Thyroid gland (tissue), 4 donors: ENCODE measurements at regions of chr1 and their contacts with region 1.

Region 1: GRCh38 chr1:12124693-12125421 is 41.9 kb upstream of the TNFRSF1B start:
- DNase-seq: peak; percentile 80 to 85
- H3K4me3 ChIP-seq: no peak overlapping the region
- H3K27ac ChIP-seq: peak overlapping the region in 1 of 3 donors; percentile 2
- H3K4me1 ChIP-seq: peaks cover 13% of the 10 kb centered on the region in 2 donors
- H3K27me3 ChIP-seq: no peaks in the 10 kb centered on the region
- CTCF ChIP-seq: peak; percentile 92 to 99 (median 98)
- POLR2A ChIP-seq: no peak

Region 2: DNA sequence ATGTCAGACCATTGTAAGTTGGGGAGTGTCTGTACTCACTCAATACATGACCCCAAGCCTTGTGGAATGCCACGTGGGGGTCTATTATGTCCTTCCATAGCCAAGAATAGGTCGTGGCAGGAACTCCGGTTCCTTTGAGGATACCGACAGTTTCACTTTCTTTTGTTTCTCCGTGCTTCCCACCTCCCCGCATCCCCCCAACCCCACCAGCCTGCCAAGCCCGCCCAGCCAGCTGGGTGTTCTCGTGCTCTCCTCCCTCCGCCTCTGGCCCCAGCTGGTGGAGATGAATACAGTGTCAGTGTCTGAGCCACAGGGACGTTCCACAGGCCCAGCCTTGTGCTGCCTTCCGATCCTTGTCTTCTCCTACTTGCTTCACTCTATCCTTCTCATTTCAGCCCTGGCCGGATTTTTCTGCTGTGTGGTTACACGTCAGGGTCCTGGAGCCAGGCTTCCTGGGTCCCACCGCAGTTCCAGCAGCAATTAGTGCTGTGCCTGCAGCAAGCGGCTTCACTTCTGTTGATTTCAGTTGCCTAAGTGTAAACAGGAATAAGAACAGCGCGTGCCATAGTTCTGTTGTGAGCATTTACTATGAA is 393.1 kb before region 1 on chr1:
- intact Hi-C with region 1: no loop called
- DNase-seq: peak in 1 of 2 donors; percentile 68
- H3K4me3 ChIP-seq: peak overlapping the region in 1 of 3 donors; percentile 12
- H3K27ac ChIP-seq: peak overlapping the region in 1 of 3 donors; percentile 17
- H3K4me1 ChIP-seq: peaks cover 5 to 24% of the 10 kb centered on the region in 2 donors
- H3K27me3 ChIP-seq: no peaks in the 10 kb centered on the region
- CTCF ChIP-seq: no peak
- POLR2A ChIP-seq: no peak

Region 3: GRCh38 chr1:12208764-12209494 is 84.1 kb after region 1 on chr1:
- intact Hi-C with region 1: loop called (anchors 2 kb)
- DNase-seq: peak; percentile 89 to 92
- H3K4me3 ChIP-seq: no peak overlapping the region
- H3K27ac ChIP-seq: no peak overlapping the region
- H3K4me1 ChIP-seq: peaks cover 0 to 14% of the 10 kb centered on the region in 2 donors
- H3K27me3 ChIP-seq: no peaks in the 10 kb centered on the region
- CTCF ChIP-seq: peak; percentile 89 to 99 (median 94)
- POLR2A ChIP-seq: no peak

Region 4: DNA sequence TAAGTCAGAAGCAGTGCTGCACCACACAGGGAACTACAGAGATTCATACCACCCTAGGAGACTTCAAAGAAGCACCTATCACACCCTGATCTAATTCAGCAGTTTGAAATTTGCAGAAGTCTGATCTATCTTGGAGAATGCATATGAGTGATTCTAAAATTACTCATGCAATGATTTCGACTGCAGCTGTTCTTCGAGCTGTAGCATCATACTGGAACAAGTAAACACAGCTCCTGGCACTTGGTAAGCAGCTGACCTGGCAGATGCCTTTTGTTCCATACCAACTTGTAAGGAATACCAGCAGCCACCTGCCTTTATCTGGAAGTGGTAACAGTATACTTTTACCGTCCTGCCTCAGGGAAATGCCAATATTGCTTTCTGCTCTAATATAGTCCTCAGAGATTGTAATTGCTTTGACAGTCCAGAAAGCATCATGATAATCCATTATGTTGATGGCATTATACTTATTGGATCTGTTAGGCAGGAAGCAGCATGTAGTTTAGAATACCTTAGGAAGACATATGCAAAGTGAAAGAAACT is 544.7 kb after region 1 on chr1:
- intact Hi-C with region 1: loop called (anchors 10 kb)
- DNase-seq: no peak
- H3K4me3 ChIP-seq: no peak overlapping the region
- H3K27ac ChIP-seq: no peak overlapping the region
- H3K4me1 ChIP-seq: no peaks in the 10 kb centered on the region
- H3K27me3 ChIP-seq: no peaks in the 10 kb centered on the region
- CTCF ChIP-seq: no peak
- POLR2A ChIP-seq: no peak